Activated T-helper 1 cell treated with anti-CD3 and anti-CD28 coated beads, Interleukin-12 subunit alpha, Interleukin-12 subunit beta, Interleukin-2, Interleukin-4 antibody, amounts not matched to agents 30 ng/mL and 10 ng/mL and 1 ng/mL, durations not matched to agents 14 hours and 24 hours and 36 hours (primary cell): ENCODE measurements at regions of chr17 and their contacts with region 1.

Region 1: GRCh38 chr17:40531051-40531991 is 29.9 kb upstream of the TNS4 start:
- DNase-seq: peak; percentile 48
- H3K4me3 Mint-ChIP-seq: peak overlapping the region; percentile 82
- H3K27ac Mint-ChIP-seq: peak overlapping the region; percentile 93
- H3K4me1 Mint-ChIP-seq: peaks cover 82% of the 10 kb centered on the region
- H3K27me3 Mint-ChIP-seq: no peaks in the 10 kb centered on the region

Region 2: GRCh38 chr17:40362696-40363110 is 168.6 kb before region 1 on chr17:
- intact Hi-C with region 1: loop called (anchors 1 kb)
- DNase-seq: peak; percentile 85
- H3K4me3 Mint-ChIP-seq: peak overlapping the region; percentile 77
- H3K27ac Mint-ChIP-seq: peak overlapping the region; percentile 84
- H3K4me1 Mint-ChIP-seq: peaks cover 14% of the 10 kb centered on the region
- H3K27me3 Mint-ChIP-seq: peaks cover 1% of the 10 kb centered on the region

Region 3: GRCh38 chr17:40417609-40418427 is 113.5 kb before region 1 on chr17 and contains the start of gene TOP2A:
- intact Hi-C with region 1: loop called (anchors 1 kb)
- DNase-seq: peak; percentile 97
- H3K4me3 Mint-ChIP-seq: peak within 1 kb of the TSS; percentile 96
- H3K27ac Mint-ChIP-seq: peak within 1 kb of the TSS; percentile 92
- H3K4me1 Mint-ChIP-seq: peaks cover 35% of the 10 kb centered on the region
- H3K27me3 Mint-ChIP-seq: peaks cover 2% of the 10 kb centered on the region
- total RNA-seq, gene TOP2A: 161 and 174 TPM in 2 replicates

Region 4: DNA sequence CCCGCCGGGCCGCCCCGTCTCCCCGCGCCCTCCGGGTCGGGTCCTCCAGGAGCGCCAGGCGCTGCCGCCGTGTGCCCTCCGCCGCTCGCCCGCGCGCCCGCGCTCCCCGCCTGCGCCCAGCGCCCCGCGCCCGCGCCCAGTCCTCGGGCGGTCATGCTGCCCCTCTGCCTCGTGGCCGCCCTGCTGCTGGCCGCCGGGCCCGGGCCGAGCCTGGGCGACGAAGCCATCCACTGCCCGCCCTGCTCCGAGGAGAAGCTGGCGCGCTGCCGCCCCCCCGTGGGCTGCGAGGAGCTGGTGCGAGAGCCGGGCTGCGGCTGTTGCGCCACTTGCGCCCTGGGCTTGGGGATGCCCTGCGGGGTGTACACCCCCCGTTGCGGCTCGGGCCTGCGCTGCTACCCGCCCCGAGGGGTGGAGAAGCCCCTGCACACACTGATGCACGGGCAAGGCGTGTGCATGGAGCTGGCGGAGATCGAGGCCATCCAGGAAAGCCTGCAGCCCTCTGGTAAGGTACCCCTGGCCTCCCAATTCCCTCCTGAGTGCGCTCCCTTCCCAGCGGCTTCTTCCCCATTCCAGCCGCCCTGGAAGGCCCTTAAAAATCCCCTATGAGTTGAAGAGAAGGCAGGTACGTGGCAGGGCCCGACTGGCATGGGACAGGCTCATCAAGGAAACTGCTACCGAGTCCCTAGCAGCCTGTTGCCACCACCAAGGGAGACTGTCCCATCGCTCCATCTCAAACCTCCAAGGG is 87.6 kb before region 1 on chr17:
- intact Hi-C with region 1: loop called (anchors 1 kb)
- DNase-seq: peak; percentile 63
- H3K4me3 Mint-ChIP-seq: peak overlapping the region; percentile 80
- H3K27ac Mint-ChIP-seq: peak overlapping the region; percentile 90
- H3K4me1 Mint-ChIP-seq: peaks cover 65% of the 10 kb centered on the region
- H3K27me3 Mint-ChIP-seq: peaks cover 7% of the 10 kb centered on the region

Region 5: GRCh38 chr17:40516581-40517285 is 14.6 kb before region 1 on chr17:
- intact Hi-C with region 1: loop called (anchors 1 kb)
- DNase-seq: peak; percentile 78
- H3K4me3 Mint-ChIP-seq: peak overlapping the region; percentile 84
- H3K27ac Mint-ChIP-seq: peak overlapping the region; percentile 97
- H3K4me1 Mint-ChIP-seq: peaks cover 79% of the 10 kb centered on the region
- H3K27me3 Mint-ChIP-seq: no peaks in the 10 kb centered on the region

Region 6: GRCh38 chr17:40598663-40599467 is 67.5 kb after region 1 on chr17:
- intact Hi-C with region 1: no loop called
- DNase-seq: peak; percentile 56
- H3K4me3 Mint-ChIP-seq: peak overlapping the region; percentile 46
- H3K27ac Mint-ChIP-seq: peak overlapping the region; percentile 89
- H3K4me1 Mint-ChIP-seq: peaks cover 87% of the 10 kb centered on the region
- H3K27me3 Mint-ChIP-seq: no peaks in the 10 kb centered on the region